HEK293T (cell line): ENCODE measurements at regions of chr11 and their contacts with region 1.

Region 1: DNA sequence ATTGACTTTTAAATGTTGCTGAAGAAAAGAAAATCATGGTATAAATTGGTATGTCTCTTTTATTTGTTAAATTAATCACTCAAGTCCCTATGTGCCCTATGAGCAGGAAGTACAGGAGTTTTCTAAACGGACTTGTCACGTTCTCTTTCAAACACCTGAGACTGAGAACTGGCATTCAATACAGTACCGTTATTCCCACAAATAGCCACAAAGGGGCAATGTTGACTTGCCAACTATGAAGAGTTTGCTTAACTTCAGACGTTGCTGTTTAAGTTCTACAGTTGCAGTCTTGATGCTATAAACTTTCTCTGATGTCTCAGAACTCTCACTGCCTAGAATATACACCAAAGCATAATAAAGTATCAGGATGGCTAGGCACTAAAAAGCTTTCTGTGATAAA is 7.6 kb downstream of the OR56A1 start:
- DNase-seq: peak; percentile 23

Region 2: DNA sequence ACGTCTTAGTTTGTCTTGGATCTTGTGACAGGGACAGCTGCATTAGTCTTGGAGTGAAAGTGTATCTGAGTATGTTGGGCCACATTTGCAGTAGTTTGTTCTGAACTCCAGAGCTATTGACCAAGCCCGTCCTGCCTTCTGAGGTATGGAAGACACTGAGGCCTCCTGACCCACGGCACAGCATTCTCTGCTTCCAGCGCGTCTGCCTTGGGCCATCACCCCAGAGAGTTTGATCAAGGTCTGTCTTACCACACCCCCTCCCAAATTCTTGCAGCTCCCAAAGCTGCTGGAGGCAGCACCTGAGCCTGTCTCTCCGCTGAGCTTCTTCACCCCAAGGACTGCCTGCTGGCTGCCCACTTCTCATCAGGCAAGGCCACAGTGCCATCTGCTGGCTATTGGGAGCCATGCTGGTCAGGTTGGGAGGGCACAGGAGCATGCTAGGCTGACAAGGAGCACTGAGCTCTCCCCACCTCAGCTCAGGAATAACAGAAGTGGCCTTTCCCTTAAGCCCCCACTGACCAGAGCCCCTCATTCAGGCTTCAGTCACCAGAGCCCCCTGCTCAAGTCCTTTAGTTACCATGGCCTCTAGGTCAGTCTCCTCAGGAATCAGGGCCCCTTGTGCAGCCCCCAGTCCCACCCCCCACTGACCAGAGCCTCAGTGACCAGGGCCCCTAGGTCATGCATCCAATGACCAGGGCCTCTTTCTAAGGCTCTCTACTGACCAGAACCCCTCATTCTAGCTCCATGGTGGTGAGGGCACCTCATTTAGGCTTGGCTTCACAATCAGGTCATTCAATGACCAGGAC is 340.1 kb after region 1 on chr11:
- CTCF ChIA-PET with region 1: interaction called, 15 read pairs
- POLR2A ChIA-PET with region 1: no interaction called
- DNase-seq: peak; percentile 81